ENCODE measurements at regions of chr2 and their contacts with region 1.

Region 1: DNA sequence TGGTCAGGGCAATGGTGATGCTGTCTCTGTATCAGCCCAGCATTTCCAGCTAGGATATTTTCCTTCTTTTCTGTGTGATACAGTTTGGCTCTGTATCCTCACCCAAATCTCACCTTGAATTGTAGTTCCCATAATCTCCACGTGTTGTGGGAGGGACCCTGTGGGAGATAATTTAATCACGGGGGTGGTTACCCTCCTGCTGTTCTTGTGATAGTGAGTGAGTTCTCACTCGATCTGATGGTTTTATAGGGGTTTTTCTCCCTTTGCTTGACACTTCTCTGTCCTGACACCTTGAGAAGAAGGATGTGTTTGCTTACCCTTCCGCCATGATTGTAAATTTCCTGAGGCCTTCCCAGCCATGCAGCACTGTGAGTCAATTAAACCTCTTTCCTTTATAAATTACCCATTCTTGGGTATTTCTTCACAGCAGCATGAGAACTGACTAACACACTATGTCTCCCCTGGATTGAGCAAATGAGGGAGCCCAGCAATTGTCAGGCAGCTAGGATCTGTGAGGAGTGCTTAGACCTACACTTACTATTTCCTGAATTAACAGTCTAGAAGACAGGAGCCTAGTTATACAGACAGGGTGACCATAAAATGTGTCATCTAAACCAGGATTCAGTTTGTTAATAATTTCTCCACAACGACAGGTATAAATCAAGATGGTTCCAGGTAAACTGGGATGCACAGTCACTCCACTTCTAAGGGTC is 6.0 kb downstream of the SCN2A start:
- DNase-seq: peak in 3 of 42 donors; percentile 22 to 33 (median 25)

Region 2: DNA sequence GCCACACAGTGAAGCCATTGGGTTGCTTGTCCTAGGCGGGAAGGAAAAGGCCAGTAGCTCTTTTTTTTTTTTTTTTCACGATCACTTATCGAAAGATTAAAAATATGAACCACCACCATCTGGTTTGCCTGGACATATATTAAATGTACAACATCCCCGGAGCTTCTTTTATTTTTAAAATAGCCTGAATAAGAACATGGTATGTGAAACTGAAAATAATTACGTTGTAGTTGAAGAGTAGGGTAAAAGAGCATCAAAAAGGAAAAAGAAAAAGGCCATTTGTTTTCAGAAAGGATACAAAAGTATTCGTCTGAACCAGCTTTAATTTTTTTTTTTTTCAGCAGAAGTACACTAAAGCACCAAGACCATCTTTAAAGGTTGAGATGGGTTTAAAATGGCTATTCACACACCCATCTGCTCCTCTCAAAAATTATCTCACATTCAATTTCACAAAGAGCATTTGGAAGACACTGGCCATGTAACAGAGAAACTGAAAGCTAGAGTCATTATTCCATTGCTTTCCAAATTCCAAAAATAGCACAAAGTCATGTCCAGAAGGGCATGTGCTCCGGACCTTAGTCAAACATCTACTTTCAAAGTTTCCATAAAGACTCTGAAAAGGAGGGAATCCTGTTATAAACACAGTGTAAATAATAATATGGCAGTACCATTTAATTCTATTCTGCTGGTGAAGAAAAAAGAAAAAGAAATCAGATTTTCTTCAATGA is 124.3 kb before region 1 on chr2:
- intact Hi-C with region 1: no loop called
- DNase-seq: no peak

Region 3: DNA sequence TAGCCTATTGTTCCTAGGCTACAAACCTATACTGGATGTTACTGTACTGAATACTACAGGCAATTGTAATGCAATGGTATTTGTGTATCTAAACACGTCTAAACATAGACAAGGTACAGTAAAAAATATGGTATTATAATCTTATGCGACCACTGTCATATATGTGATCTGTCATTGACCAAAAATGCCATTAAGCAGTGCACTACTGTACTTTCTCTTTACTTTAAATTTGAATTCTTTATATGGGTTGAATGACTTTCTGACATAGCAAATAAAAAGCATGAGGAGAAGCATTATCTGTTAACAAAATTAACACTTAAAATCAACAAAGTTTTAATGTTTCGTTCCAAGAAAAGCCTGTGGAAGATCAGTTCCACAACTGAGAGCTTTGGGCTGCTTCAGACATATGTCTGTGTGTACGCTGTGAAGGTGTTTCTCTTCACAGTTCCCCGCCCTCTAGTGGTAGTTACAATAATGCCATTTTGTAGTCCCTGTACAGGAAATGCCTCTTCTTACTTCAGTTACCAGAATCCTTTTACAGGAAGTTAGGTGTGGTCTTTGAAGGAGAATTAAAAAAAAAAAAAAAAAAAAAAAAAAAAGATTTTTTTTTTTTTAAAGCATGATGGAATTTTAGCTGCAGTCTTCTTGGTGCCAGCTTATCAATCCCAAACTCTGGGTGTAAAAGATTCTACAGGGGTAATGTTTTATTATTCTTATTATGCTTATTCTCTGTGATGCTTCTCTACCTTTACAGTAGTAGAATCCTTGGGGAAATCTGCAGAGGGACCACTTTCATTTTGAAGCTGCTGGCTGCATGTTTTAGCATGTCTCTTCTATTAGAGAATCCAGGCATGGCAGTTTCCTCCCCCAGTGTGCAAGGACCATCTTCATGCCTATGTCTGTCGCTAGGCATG is 48.5 kb after region 1 on chr2:
- intact Hi-C with region 1: loop called (anchors 5 kb)
- DNase-seq: peak in 24 of 42 donors; percentile 19 to 84 (median 50)

Measured in head of caudate nucleus (tissue), 42 donors.